Activated naive CD8-positive, alpha-beta T cell treated with anti-CD3 and anti-CD28 coated beads, Interleukin-2, amount 10 ng/mL, durations not matched to agents 7 days and 5 days (primary cell): ENCODE measurements at regions of chr11 and their contacts with region 1.

Region 1: DNA sequence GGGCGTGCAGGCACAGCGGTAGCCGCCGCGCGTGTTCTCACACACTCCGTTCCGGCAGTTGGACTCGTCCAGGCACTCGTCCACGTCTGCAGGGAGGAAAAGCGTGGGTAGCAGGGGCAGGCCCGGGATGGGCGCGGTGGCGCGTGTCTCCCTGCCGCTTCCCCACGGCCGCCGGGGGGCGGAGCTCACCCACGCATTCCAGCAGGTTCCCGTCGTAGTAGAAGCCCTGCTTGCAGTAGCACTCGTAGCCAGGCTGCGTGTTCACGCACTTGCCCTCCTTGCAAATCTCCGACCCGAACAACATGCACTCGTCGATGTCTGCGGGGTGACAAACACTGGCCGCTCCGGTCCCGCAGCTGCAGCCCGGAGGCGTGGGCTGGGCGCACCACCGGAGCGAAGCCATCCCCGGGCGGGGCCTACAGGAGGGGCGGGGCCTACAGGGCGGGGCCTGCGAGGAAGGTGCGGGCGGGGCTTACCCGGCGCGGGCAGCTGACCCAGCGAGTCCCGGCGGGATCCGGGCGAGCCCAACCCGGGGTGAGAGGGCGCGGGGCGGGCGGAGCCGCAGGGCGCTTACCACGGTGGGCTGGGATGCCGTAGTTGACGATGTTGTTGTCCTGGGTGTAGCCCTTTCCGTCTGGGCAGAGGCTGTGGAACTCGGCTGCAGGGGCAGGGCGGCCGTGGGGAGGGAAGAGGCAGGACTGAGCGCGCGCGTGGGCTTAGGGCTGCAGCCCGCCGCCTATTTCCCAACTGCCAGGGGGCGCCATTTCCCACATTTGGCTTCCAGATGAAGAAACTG is 15.6 kb downstream of the SCYL1 start:
- DNase-seq: peak; percentile 97
- ATAC-seq: peak; percentile 86
- H3K4me3 Mint-ChIP-seq: peak overlapping the region; percentile 83
- H3K27ac Mint-ChIP-seq: peak overlapping the region; percentile 83
- H3K4me1 Mint-ChIP-seq: peaks cover 4% of the 10 kb centered on the region
- H3K27me3 Mint-ChIP-seq: no peaks in the 10 kb centered on the region

Region 2: GRCh38 chr11:65403607-65404121 is 136.8 kb before region 1 on chr11:
- POLR2A ChIA-PET with region 1: no interaction called
- DNase-seq: no peak
- ATAC-seq: no peak
- H3K4me3 Mint-ChIP-seq: no peak overlapping the region
- H3K27ac Mint-ChIP-seq: peak overlapping the region; percentile 38
- H3K4me1 Mint-ChIP-seq: peaks cover 4% of the 10 kb centered on the region
- H3K27me3 Mint-ChIP-seq: no peaks in the 10 kb centered on the region

Region 3: DNA sequence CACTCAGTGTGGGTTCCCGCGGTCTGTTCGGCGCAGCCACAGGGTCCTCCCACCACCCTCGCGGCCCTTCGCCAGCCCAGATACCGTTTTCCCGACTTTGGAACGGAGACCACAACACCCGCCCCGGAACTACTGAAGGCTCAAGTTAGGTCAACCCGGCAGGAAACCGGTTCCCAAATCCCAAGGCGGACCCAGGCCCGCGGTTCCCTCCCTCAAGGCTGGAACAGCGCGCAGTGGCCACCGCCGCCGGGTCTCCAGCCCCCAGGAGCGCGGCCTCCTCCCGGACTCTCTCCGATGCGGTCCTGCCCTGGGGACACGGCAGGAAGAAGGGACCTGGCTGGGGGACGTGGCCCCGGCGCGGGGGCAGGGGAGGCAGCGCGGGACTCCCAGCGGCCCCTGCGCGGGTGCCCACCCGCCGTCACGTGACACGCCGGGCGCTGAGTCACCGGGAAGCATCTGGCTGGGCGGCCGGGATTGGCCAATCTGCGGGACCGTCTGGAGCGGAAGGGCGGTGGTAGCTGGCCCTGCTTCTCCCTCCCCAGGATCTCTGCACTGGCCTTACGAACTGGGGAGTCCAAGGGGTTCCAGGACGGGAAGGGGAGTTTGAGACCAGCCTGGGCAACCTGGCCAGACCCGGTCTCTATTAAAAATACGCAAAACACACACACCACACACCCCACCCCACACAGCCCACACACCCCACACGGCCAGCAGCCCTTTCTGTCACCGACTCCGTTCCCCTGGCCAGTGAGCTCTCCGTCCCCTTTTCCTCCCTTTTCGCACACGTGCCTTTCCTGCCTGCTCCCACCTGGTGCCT is 63.1 kb before region 1 on chr11:
- POLR2A ChIA-PET with region 1: no interaction called
- DNase-seq: peak; percentile 92
- ATAC-seq: peak; percentile 85
- H3K4me3 Mint-ChIP-seq: peak overlapping the region; percentile 100
- H3K27ac Mint-ChIP-seq: peak overlapping the region; percentile 98
- H3K4me1 Mint-ChIP-seq: peaks cover 9% of the 10 kb centered on the region
- H3K27me3 Mint-ChIP-seq: peaks cover 4% of the 10 kb centered on the region

Region 4: GRCh38 chr11:65524741-65525545 is 15.6 kb before region 1 on chr11 and contains the start of gene SCYL1:
- POLR2A ChIA-PET with region 1: interaction called, 11 read pairs
- DNase-seq: peak; percentile 88
- ATAC-seq: peak; percentile 59
- H3K4me3 Mint-ChIP-seq: peak within 1 kb of the TSS; percentile 87
- H3K27ac Mint-ChIP-seq: peak within 1 kb of the TSS; percentile 93
- H3K4me1 Mint-ChIP-seq: peaks cover 42% of the 10 kb centered on the region
- H3K27me3 Mint-ChIP-seq: no peaks in the 10 kb centered on the region
- total RNA-seq, gene SCYL1: 74.2 to 74.9 TPM

Region 5: DNA sequence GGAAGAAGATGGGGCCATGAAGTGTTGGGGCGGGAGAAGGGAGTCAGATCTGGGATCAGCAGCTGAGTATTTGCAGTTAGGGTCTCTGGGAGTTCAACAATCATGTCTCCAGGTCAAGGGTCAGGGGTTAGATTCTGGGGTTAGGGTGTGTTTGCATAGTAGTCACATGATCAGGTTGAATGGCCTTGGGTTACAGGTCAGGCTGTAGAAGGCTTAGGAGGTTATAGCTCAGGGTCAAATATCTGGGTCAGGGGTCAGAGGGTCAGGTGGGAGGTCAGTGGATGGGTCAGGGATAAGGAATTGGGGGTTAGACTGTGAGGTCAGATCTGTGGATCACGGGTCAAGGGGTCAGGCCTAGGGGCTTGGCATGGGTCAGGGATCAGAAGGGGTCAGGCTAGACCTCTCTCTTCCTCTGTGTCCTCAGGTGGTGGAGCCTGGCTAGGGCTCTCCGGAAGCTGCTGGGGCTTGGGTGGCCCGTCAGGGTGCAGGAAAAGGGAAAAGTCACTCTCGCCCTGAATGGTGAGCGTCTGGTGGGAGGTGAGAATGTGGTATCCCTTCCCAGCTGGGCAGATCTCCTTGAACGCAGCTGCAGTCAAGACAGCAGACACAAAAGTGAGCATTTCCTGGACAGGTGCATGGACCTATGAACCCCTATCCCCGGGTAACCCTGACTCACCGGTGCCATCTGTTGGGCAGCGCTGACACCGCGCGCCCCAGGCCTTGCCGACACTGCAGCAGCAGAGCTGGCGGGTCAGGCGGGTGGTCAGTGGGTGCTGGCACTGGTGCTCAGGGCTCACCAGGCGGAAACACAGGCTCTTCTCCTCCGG is 11.3 kb after region 1 on chr11:
- POLR2A ChIA-PET with region 1: interaction called, 22 read pairs
- DNase-seq: peak; percentile 74
- ATAC-seq: peak; percentile 29
- H3K4me3 Mint-ChIP-seq: peak overlapping the region; percentile 1
- H3K27ac Mint-ChIP-seq: peak overlapping the region; percentile 30
- H3K4me1 Mint-ChIP-seq: peaks cover 57% of the 10 kb centered on the region
- H3K27me3 Mint-ChIP-seq: no peaks in the 10 kb centered on the region

Region 6: DNA sequence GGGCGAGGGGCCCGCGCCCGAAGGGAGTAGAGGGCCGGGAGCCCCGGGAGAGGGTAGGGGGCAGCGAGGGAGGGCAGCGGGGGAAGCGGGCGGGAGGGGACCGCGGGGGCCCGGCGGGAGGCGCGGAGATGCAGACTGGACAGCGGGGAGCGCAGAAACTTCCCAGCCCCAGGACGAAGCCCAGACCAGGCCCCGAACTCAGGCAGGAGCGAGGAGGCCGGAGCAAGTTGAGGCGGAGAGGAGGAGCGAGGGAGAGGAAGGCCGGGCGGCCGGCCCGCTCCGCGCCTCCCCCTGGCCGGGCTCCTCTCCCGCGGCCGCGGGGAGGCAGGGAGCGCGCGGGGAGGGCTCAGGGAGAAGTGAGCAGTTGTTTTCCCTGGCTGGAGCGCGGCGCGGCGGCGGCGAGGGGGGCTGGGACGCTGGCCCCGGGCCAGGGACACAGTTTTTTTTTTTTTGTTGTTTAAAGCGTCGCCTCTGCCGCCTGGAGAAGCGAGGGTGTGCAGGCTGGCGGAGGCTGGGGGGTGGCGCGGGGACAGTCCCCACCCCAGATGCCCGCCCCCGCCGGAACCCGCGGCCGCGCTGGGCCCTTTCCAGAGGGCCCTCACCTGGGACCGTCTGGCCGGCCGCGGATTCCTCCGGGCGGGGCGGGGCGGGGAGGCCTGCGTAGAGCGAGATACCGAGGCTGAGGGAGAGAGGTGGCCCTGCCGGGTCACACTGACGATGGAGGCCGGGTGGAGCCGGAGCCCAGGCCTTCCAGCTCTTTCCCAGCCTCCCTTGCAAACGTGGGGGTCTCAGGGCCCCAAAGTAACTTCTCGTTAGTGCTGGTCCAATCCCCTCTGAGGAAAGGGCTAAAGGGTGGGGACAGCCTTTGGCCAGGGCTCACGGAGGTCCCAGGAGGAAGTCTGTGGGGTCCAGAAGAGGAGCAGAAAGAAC is 17.8 kb after region 1 on chr11 and contains the start of gene LTBP3:
- POLR2A ChIA-PET with region 1: interaction called, 22 read pairs
- DNase-seq: peak; percentile 61
- ATAC-seq: peak; percentile 37
- H3K4me3 Mint-ChIP-seq: peak within 1 kb of the TSS; percentile 86
- H3K27ac Mint-ChIP-seq: peak within 1 kb of the TSS; percentile 87
- H3K4me1 Mint-ChIP-seq: peaks cover 38% of the 10 kb centered on the region
- H3K27me3 Mint-ChIP-seq: no peaks in the 10 kb centered on the region
- total RNA-seq, gene LTBP3: 116 to 119 TPM

Region 7: DNA sequence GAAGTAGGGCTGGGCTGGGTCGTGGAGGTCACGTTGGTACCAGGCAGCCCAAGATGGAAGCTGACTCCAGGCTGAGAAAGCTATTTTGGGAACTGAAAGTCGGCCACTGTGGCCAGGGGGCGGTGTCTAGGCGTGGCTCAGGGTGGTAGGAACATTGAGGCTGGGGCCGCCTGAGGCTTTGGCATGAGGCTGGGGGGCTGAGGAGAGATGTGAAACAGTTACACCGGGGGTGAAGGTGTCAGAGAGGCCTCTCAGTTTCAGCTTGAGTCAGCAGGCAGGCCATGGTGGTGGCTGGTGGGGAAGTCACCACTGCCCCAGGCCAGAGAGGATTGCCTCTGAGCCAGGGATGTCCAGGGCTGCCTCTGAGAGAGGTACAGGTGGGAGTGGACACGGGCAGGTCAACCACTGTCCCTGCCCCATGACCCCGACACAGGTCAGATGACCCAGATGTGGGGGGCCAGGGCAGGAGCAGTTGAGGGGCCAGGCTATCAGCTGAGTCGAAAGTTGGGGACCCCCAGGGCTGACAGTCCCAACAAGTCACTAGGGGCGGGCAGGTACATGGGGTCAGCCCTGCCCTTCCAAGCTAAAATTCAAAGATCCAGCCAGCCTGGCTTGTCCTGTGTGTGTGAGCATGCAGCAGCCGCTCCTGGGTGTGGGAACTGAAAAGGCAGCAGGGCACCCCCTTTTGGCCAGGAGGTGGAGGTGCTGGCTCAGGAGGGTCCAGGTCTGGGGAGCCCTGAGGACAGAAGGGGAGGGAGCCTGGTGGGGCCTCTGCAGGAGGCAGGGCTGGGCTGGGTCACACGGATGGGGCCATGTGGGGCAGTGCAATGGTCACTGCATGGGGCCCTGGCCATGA is 47.9 kb after region 1 on chr11:
- POLR2A ChIA-PET with region 1: interaction called, 36 read pairs
- DNase-seq: peak; percentile 75
- ATAC-seq: peak; percentile 82
- H3K4me3 Mint-ChIP-seq: peak overlapping the region; percentile 64
- H3K27ac Mint-ChIP-seq: peak overlapping the region; percentile 93
- H3K4me1 Mint-ChIP-seq: peaks cover 31% of the 10 kb centered on the region
- H3K27me3 Mint-ChIP-seq: no peaks in the 10 kb centered on the region

Region 8: GRCh38 chr11:65593518-65594298 is 53.2 kb after region 1 on chr11:
- POLR2A ChIA-PET with region 1: interaction called, 36 read pairs
- DNase-seq: peak; percentile 60
- ATAC-seq: peak; percentile 48
- H3K4me3 Mint-ChIP-seq: no peak overlapping the region
- H3K27ac Mint-ChIP-seq: peak overlapping the region; percentile 48
- H3K4me1 Mint-ChIP-seq: peaks cover 6% of the 10 kb centered on the region
- H3K27me3 Mint-ChIP-seq: no peaks in the 10 kb centered on the region

Region 9: DNA sequence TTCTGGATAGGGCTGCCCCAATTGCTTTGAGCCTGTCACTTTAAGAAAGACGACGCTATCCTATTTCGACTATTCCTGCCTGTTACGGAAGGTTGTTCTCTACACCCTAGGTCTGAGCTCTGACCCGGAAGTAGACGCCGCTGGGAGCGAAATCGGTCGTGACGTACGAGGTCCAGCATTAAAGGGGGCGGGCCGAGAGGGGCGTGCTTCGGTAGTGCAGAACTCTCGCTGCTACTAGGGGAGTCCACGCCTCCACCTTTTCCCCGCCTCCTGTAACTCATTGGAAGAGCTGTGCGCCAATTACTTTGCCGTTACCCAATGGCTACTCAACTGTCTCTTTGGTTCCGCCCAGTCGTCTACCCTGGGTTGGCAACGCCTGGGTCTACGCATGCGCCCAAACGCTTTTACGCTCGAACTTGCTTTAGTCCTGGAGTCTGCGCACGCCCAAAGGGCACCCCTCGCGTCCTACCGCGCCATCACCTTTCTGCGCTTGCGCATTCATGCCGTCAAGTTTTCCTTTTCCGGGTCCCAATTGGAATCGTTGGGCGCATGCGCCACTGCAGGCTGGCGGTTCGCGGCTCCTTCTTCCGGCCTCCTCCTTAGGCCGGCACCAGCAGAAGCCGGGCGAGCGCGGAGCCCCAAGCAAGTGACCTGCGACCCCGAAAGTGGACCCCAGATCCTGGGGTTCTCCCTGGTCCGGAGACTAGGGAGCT is 74.9 kb after region 1 on chr11 and contains the start of gene PCNX3:
- POLR2A ChIA-PET with region 1: interaction called, 10 read pairs
- DNase-seq: peak; percentile 97
- ATAC-seq: peak; percentile 85
- H3K4me3 Mint-ChIP-seq: peak within 1 kb of the TSS; percentile 97
- H3K27ac Mint-ChIP-seq: peak within 1 kb of the TSS; percentile 96
- H3K4me1 Mint-ChIP-seq: peaks cover 22% of the 10 kb centered on the region
- H3K27me3 Mint-ChIP-seq: no peaks in the 10 kb centered on the region
- total RNA-seq, gene PCNX3: 57.2 to 60.2 TPM